ENCODE measurements at regions of chr1 and their contacts with region 1.

Region 1: GRCh38 chr1:168637350-168637991 is 61.1 kb downstream of the XCL1 start:
- DNase-seq: no peak
- H3K4me3 ChIP-seq: no peak overlapping the region
- CTCF ChIP-seq: peak; percentile 43

Region 2: GRCh38 chr1:169106095-169106920 is 468.8 kb after region 1 on chr1 and contains the start of gene ATP1B1:
- in situ Hi-C with region 1: loop called (anchors 25 kb)
- DNase-seq: peak; percentile 45
- H3K4me3 ChIP-seq: peak within 1 kb of the TSS; percentile 87
- CTCF ChIP-seq: peak; percentile 41